HepG2 (cell line): ENCODE measurements at regions of chr1 and their contacts with region 1.

Region 1: DNA sequence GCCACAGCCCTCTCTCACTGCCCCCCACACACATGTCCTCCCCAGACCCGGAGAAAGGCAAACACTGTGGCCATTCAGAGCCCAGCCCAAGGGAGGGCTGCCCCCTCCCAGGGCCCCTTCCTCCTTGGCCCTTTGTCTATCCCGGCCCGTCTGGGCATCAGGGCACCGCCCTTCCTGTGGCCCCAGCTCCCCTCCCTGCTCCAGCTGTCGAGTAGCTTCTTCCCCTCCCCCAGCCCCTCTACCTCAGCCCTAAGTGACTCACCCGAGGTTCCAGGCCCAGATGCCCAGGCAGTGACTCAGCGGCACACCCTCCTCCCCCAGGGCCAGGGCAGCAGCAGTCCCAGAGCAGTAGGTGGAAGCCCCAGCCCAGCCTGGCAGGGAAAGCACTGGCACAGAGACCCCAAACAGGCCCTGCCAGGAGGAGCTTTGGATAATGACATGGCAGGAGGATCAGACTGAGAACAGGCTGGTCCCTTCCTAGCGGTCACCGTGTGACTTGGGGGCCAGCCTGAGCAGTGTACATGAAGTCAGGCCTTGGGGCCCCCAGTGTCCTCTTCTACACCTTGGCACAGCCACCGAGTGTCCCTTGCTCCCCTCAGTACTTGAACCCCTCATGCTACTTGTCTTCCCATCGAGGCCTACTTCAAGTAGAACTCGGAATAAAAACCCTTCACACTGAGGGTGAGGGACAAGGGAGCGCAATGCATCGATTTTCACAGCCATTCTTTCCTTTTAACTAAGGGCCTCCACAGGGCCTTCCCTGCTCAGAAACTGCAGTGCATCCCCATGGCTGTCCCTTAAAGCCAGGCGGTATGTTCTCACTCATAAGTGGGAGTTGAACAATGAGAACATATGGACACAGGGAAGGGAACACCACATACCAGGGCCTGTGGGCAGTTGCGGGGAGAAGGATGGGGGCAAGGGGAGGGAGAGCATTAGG is 1.1 kb upstream of the S100A2 start:
- DNase-seq: peak; percentile 89
- ATAC-seq: peak; percentile 82
- H3K4me3 ChIP-seq: peak overlapping the region in 1 of 3 experiments; percentile 48; a peak in 2 of 6 replicates
- H3K27ac ChIP-seq: peak overlapping the region; percentile 35
- H3K4me1 ChIP-seq: peaks cover 54% of the 10 kb centered on the region
- H3K27me3 ChIP-seq: no peaks in the 10 kb centered on the region
- CTCF ChIP-seq: no peak; the same call in 1 of the 2 replicates
- EP300 ChIP-seq: peak in 1 of 2 experiments; percentile 73; a peak in 2 of 4 replicates
- POLR2A ChIP-seq: no peak
- RAD21 ChIP-seq: no peak

Region 2: GRCh38 chr1:153510984-153511410 is 55.7 kb before region 1 on chr1:
- CTCF ChIA-PET with region 1: interaction called, 63 read pairs
- POLR2A ChIA-PET with region 1: interaction called, 10 read pairs
- in situ Hi-C with region 1: loop called (anchors 5 kb)
- intact Hi-C with region 1: loop called (anchors 1 kb)
- DNase-seq: peak; percentile 71
- ATAC-seq: peak; percentile 85
- H3K4me3 ChIP-seq: no peak overlapping the region
- H3K27ac ChIP-seq: no peak overlapping the region
- H3K4me1 ChIP-seq: peaks cover 35% of the 10 kb centered on the region
- H3K27me3 ChIP-seq: no peaks in the 10 kb centered on the region; a peak in 3 of 5 replicates
- CTCF ChIP-seq: peak; percentile 97
- EP300 ChIP-seq: no peak
- POLR2A ChIP-seq: no peak
- RAD21 ChIP-seq: peak; percentile 95

Region 3: DNA sequence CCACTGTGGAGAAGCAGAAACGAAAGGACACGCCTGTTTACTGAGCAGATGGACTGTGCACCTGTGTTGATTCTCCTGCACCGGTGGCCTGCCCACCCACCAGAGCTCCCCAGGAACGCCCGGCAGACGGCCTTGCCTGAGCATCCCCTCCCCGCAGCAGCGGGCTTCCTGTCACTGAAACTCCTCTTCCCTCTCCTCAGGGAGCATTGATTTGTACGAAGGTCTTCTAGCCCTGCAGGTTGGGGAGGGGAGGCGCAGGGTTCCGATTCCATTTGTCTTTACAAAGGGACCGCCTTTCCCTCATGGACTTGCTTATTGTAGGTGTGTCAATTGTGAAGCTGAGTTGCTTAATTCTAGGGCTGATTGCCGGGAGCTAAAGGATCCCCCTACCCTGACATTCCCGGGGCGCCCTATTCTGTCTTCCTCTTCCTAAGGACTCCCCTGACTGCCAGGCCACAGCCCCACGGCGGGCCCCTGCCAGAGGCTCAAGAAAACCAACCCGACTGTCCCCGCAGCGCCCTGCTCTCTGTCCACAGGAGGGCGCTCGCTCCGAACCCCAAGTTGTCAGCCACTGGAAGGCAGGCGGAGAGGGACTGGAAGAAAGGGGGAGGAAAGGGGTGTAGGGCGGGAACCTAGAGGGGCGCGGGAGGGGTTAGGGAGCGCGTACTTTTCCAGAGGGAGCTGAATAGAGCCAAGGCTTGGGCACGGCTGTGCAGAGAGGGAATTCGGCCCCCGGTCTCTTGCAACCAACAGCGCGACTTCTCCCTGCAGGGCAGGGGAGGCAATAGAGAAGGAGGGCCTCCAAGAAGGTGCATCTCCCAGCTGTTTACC is 33.7 kb before region 1 on chr1:
- CTCF ChIA-PET with region 1: interaction called, 42 read pairs
- POLR2A ChIA-PET with region 1: interaction called, 49 read pairs
- in situ Hi-C with region 1: loop called (anchors 5 kb)
- intact Hi-C with region 1: loop called (anchors 1 kb)
- DNase-seq: peak; percentile 72
- ATAC-seq: peak; percentile 84
- H3K4me3 ChIP-seq: peak overlapping the region; percentile 39 to 64 (median 41)
- H3K27ac ChIP-seq: peak overlapping the region; percentile 33
- H3K4me1 ChIP-seq: peaks cover 59% of the 10 kb centered on the region
- H3K27me3 ChIP-seq: no peaks in the 10 kb centered on the region; a peak in 1 of 5 replicates
- CTCF ChIP-seq: peak; percentile 90
- EP300 ChIP-seq: no peak
- POLR2A ChIP-seq: no peak
- RAD21 ChIP-seq: peak; percentile 82

Region 4: DNA sequence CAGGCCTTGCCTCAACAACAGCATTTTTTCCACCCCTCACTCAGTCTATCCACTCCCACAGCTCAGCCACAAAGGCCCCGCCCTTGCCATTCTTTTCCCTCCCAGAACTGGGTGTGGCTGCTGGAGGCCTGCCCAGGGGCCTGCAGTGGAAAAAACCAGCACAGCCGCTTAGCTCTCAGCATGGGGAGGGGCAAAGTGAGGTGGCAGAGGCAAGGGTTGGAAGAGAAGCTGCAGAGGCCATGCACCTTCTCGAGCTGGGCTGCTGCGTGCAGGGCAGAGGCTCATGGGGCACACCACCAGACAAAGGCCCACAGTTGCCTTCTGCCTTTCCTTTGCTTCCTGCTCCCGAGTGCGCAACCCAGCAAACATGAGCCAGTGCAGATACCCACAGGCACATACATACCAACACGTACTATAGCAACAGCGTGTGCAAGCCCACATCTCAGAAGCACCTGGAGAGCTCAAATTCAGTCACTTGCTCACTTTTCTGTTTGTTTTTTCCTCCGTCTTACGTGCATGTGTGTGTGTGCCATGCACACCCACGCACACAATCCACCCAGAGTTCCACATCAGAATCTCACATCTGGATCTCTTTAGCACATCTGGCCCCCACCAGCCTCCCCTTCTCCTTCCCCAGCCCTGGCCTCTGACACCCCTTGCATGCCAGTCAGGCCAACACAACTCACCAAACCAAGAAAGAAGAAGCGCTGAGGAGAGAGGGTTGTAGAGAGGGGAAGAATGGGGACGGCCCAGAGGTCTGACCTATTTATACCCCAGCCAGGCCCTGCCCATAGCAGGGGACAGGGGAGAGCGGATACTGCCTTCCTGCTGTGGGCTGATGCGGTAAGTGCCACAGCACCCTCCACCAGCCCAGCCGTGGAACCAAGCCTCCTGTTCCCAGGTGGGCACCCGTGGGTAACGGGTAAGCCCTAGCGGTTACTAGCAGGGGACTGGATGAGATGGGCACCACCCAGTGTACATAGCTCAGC is 21.3 kb before region 1 on chr1 and contains the start of gene S100A4:
- CTCF ChIA-PET with region 1: no interaction called
- POLR2A ChIA-PET with region 1: interaction called, 22 read pairs
- in situ Hi-C with region 1: no loop called
- intact Hi-C with region 1: no loop called
- DNase-seq: peak; percentile 93
- ATAC-seq: peak; percentile 85
- H3K4me3 ChIP-seq: peak within 1 kb of the TSS in 2 of 3 experiments; percentile 32 to 62; a peak in 4 of 6 replicates
- H3K27ac ChIP-seq: peak within 1 kb of the TSS; percentile 39
- H3K4me1 ChIP-seq: peaks cover 98% of the 10 kb centered on the region
- H3K27me3 ChIP-seq: peaks cover 1 to 11% of the 10 kb centered on the region in 2 experiments; a peak in 3 of 5 replicates
- CTCF ChIP-seq: no peak
- EP300 ChIP-seq: peak in 1 of 2 experiments; percentile 87; a peak in 2 of 4 replicates
- POLR2A ChIP-seq: peak; percentile 51 to 82
- RAD21 ChIP-seq: no peak
- total RNA-seq, gene S100A4: 20.2 and 24.5 TPM in 2 replicates

Region 5: DNA sequence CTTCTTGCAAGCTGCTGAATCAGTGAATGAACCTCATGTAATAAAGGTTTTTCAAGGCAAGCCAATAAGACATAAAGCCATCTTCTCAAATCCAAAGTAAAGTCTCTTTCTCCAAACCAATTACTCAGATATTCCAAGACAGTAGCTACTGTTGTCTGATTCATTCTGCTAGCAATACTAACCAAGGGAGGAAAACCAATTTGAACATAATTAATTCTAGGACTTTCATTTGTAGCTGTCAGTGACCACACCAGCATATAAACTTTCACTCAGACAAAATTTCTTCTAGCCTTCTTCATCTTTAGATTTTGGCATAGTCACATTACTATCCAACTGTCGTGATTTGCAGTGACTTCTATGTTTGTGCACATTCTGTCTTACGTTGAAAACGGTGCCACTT is 150.6 kb after region 1 on chr1:
- CTCF ChIA-PET with region 1: no interaction called
- POLR2A ChIA-PET with region 1: no interaction called
- in situ Hi-C with region 1: no loop called
- intact Hi-C with region 1: no loop called
- DNase-seq: no peak
- ATAC-seq: no peak
- H3K4me3 ChIP-seq: no peak overlapping the region
- H3K27ac ChIP-seq: no peak overlapping the region
- H3K4me1 ChIP-seq: no peaks in the 10 kb centered on the region
- H3K27me3 ChIP-seq: no peaks in the 10 kb centered on the region
- CTCF ChIP-seq: no peak
- EP300 ChIP-seq: no peak
- POLR2A ChIP-seq: no peak
- RAD21 ChIP-seq: no peak